GM12878 (cell line): ENCODE measurements at regions of chr17 and their contacts with region 1.

Region 1: DNA sequence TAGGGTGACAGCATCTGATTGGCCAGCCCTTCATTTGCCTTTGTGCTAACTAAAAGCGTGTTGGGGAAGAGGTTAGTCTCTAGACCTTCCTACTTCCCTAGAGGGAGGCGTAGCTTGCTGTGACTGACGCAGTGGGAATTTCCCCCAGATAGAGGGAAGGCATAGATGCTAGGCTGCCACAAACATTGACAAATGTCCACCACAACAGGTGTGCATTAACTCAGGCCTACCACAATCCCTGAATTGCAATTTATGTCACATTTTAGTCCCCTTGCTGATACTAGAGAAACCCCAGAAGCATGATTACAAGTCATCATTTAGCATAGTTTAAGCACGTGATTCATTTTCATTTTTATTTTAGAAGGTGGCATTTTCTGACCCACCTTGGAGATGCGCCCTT is 76.3 kb upstream of the WSB1 start:
- DNase-seq: peak; percentile 89
- ATAC-seq: peak; percentile 88
- H3K4me3 ChIP-seq: no peak overlapping the region
- H3K27ac ChIP-seq: peak overlapping the region; percentile 72
- H3K4me1 ChIP-seq: peaks cover 38% of the 10 kb centered on the region
- H3K27me3 ChIP-seq: no peaks in the 10 kb centered on the region
- CTCF ChIP-seq: no peak
- EP300 ChIP-seq: peak; percentile 78 to 79; a peak in 3 of 4 replicates
- POLR2A ChIP-seq: no peak
- RAD21 ChIP-seq: no peak

Region 2: DNA sequence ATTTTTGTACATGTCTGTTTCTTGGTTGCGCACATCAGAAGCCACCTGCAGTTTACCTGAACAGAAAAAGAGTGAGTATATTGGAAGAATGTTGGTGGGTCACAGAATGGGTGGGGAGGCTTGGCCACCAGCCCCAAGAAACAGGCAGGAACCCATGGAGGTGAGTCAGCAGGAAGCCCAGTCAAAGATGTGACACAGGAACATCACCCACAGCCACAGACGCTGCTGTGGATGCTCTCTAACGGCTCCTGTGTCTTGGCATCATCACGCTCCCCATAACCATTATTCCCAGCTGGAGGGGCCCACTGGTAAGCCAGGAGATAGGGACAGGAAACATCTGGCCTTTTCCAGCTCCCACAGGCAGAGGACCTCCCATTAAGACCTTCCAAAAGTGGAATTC is 17.7 kb before region 1 on chr17:
- CTCF ChIA-PET with region 1: interaction called, 18 read pairs
- POLR2A ChIA-PET with region 1: no interaction called
- RAD21 ChIA-PET with region 1: interaction called, 3 read pairs
- SMC1A ChIA-PET with region 1: interaction called, 66 read pairs
- in situ Hi-C with region 1: no loop called
- intact Hi-C with region 1: no loop called
- DNase-seq: no peak
- ATAC-seq: no peak
- H3K4me3 ChIP-seq: no peak overlapping the region
- H3K27ac ChIP-seq: no peak overlapping the region
- H3K4me1 ChIP-seq: no peaks in the 10 kb centered on the region
- H3K27me3 ChIP-seq: no peaks in the 10 kb centered on the region
- CTCF ChIP-seq: no peak
- EP300 ChIP-seq: no peak
- POLR2A ChIP-seq: no peak
- RAD21 ChIP-seq: no peak

Region 3: GRCh38 chr17:27206447-27206846 is 11.2 kb before region 1 on chr17:
- CTCF ChIA-PET with region 1: interaction called, 48 read pairs
- POLR2A ChIA-PET with region 1: interaction called, 4 read pairs
- RAD21 ChIA-PET with region 1: interaction called, 6 read pairs
- SMC1A ChIA-PET with region 1: interaction called, 66 read pairs
- in situ Hi-C with region 1: no loop called
- intact Hi-C with region 1: no loop called
- DNase-seq: no peak
- ATAC-seq: peak; percentile 76
- H3K4me3 ChIP-seq: no peak overlapping the region
- H3K27ac ChIP-seq: no peak overlapping the region
- H3K4me1 ChIP-seq: no peaks in the 10 kb centered on the region
- H3K27me3 ChIP-seq: no peaks in the 10 kb centered on the region
- CTCF ChIP-seq: peak; percentile 9 to 55 (median 41); a peak in 4 of 6 replicates
- EP300 ChIP-seq: no peak
- POLR2A ChIP-seq: no peak
- RAD21 ChIP-seq: peak; percentile 19; the same call in 1 of the 2 replicates

Region 4: GRCh38 chr17:27268394-27269084 is 50.9 kb after region 1 on chr17:
- CTCF ChIA-PET with region 1: no interaction called
- POLR2A ChIA-PET with region 1: no interaction called
- RAD21 ChIA-PET with region 1: no interaction called
- SMC1A ChIA-PET with region 1: no interaction called
- in situ Hi-C with region 1: no loop called
- intact Hi-C with region 1: no loop called
- DNase-seq: no peak
- ATAC-seq: no peak
- H3K4me3 ChIP-seq: no peak overlapping the region
- H3K27ac ChIP-seq: no peak overlapping the region
- H3K4me1 ChIP-seq: no peaks in the 10 kb centered on the region
- H3K27me3 ChIP-seq: no peaks in the 10 kb centered on the region
- CTCF ChIP-seq: no peak
- EP300 ChIP-seq: no peak
- POLR2A ChIP-seq: no peak
- RAD21 ChIP-seq: no peak

Region 5: DNA sequence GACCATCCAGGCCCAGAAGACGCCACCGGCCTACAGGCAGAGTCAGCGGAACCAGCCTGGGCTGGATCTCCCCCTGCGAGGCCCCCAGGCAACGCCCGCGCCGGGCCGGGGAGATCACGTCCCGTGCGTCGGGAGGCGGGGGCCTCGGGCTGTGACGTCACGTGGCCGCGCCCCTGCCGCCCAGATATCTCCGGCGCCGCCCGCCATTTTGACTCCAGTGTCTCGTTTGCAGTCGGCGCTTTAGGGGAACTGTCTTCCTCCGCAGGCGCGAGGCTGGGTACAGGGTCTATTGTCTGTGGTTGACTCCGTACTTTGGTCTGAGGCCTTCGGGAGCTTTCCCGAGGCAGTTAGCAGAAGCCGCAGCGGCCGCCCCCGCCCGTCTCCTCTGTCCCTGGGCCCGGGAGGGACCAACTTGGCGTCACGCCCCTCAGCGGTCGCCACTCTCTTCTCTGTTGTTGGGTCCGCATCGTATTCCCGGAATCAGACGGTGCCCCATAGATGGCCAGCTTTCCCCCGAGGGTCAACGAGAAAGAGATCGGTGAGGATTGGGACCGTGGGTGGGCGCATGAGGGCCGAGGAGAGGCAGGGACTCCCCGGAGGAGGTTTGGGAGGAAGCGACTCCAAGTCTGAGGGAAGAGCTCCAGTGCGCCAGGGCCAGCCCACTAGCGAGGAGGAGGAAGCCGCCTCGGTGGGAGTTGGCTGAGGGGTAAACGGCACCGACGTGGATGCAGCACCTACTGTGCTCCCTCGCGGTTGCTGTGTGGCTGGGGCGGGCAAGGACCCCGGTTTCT is 76.5 kb after region 1 on chr17 and contains the start of gene WSB1:
- CTCF ChIA-PET with region 1: interaction called, 12 read pairs
- POLR2A ChIA-PET with region 1: interaction called, 7 read pairs
- RAD21 ChIA-PET with region 1: interaction called, 4 read pairs
- SMC1A ChIA-PET with region 1: interaction called, 17 read pairs
- in situ Hi-C with region 1: no loop called
- intact Hi-C with region 1: no loop called
- DNase-seq: peak; percentile 61
- ATAC-seq: peak; percentile 83
- H3K4me3 ChIP-seq: peak within 1 kb of the TSS; percentile 86
- H3K27ac ChIP-seq: peak within 1 kb of the TSS; percentile 97
- H3K4me1 ChIP-seq: peaks cover 11% of the 10 kb centered on the region
- H3K27me3 ChIP-seq: no peaks in the 10 kb centered on the region
- CTCF ChIP-seq: no peak
- EP300 ChIP-seq: peak; percentile 20 to 57; a peak in 2 of 4 replicates
- POLR2A ChIP-seq: peak; percentile 100
- RAD21 ChIP-seq: no peak
- polyA plus RNA-seq, gene WSB1: 26.6 to 49.8 TPM

Region 6: GRCh38 chr17:27343991-27344607 is 126.5 kb after region 1 on chr17:
- CTCF ChIA-PET with region 1: no interaction called
- POLR2A ChIA-PET with region 1: no interaction called
- RAD21 ChIA-PET with region 1: no interaction called
- SMC1A ChIA-PET with region 1: no interaction called
- in situ Hi-C with region 1: no loop called
- intact Hi-C with region 1: no loop called
- DNase-seq: no peak
- ATAC-seq: no peak
- H3K4me3 ChIP-seq: no peak overlapping the region
- H3K27ac ChIP-seq: no peak overlapping the region
- H3K4me1 ChIP-seq: peaks cover 29% of the 10 kb centered on the region
- H3K27me3 ChIP-seq: no peaks in the 10 kb centered on the region
- CTCF ChIP-seq: no peak
- EP300 ChIP-seq: no peak
- POLR2A ChIP-seq: no peak
- RAD21 ChIP-seq: no peak

Region 7: GRCh38 chr17:27423651-27424050 is 206.0 kb after region 1 on chr17:
- CTCF ChIA-PET with region 1: no interaction called
- POLR2A ChIA-PET with region 1: no interaction called
- RAD21 ChIA-PET with region 1: no interaction called
- SMC1A ChIA-PET with region 1: no interaction called
- in situ Hi-C with region 1: no loop called
- intact Hi-C with region 1: no loop called
- DNase-seq: no peak
- ATAC-seq: no peak
- H3K4me3 ChIP-seq: no peak overlapping the region
- H3K27ac ChIP-seq: no peak overlapping the region
- H3K4me1 ChIP-seq: peaks cover 3% of the 10 kb centered on the region; the same call in 1 of the 2 replicates
- H3K27me3 ChIP-seq: no peaks in the 10 kb centered on the region; a peak in 1 of 4 replicates
- CTCF ChIP-seq: no peak
- EP300 ChIP-seq: no peak
- POLR2A ChIP-seq: no peak
- RAD21 ChIP-seq: no peak